Mammary epithelial cell (primary cell): ENCODE measurements at regions of chr17 and their contacts with region 1.

Region 1: GRCh38 chr17:30906101-30906911 is at the start of gene TEFM:
- DNase-seq: peak; percentile 91
- H3K4me3 ChIP-seq: peak within 1 kb of the TSS; percentile 60 to 98 (median 95)
- H3K27ac ChIP-seq: peak within 1 kb of the TSS; percentile 69
- H3K4me1 ChIP-seq: peaks cover 5% of the 10 kb centered on the region
- H3K27me3 ChIP-seq: no peaks in the 10 kb centered on the region
- CTCF ChIP-seq: no peak
- total RNA-seq, gene TEFM: 13.9 to 19.3 TPM

Region 2: DNA sequence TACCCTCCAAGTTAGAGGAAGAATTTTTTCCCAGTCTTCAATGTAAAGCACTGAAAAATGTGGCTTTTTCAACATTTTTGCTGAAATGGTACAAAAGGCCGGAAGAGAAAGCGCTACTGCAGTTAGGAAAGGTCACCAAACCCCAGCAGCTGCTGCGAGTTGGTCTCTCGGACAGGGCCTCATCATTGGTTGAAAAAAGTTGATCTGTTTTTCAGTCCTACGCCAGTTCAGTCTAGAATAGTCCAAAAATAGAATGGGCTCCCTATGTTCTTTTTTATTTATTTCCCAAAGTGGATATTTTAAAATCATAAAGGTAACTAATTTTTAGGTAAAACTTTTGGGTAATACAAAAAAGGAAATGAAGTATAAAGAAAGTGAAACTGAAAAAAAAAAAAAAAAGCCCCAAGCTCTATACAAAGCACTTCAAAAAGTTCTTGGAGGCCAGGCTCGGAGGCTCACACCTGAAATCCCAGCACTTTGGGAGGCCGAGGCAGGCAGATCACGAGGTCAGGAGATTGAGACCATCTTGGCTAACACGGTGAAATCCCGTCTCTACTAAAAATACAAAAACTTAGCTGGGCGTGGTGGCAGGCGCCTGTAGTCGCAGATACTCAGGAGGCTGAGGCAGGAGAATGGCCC is 32.9 kb after region 1 on chr17:
- CTCF ChIA-PET with region 1: no interaction called
- dilution Hi-C with region 1: no loop called
- in situ Hi-C with region 1: no loop called
- intact Hi-C with region 1: no loop called
- DNase-seq: no peak
- H3K4me3 ChIP-seq: no peak overlapping the region
- H3K27ac ChIP-seq: no peak overlapping the region
- H3K4me1 ChIP-seq: no peaks in the 10 kb centered on the region
- H3K27me3 ChIP-seq: no peaks in the 10 kb centered on the region
- CTCF ChIP-seq: no peak

Region 3: DNA sequence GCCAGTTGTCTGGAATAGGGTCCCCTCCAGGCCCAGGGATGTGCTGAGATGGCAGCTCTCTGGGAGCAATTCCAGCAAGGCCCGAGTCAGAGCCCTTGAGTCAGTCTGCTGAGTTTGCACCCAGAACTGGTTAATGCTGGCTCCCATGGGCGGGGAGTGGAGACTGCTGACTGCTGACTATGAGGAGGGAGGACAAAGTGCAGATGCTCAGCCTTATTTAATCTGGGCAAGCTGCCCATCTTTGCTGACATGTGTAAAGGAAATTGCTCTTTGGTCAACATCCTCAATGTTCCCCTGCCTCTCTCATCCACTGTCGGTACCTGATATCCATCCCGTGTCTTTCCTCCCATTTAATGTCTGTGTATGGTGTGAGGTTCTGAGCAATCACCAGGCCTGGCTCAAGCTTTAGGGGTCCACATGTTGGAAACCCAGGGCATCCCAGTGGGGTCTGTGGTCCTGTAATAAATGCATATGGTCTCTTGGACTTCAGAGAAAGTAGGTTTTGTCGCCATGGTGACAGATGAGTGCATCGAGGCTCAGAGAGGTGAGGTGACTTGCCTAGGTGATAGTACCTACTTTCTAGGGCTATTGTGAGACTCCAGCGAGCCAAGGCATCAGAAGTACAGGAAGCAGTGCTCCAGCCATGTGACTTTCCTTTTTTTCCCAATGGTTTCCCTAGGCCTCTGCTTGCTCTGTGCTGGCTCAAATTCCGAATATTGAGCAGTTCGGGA is 44.5 kb after region 1 on chr17:
- CTCF ChIA-PET with region 1: no interaction called
- dilution Hi-C with region 1: loop called (anchors 5 kb)
- in situ Hi-C with region 1: no loop called
- intact Hi-C with region 1: no loop called
- DNase-seq: peak; percentile 69
- H3K4me3 ChIP-seq: no peak overlapping the region
- H3K27ac ChIP-seq: no peak overlapping the region
- H3K4me1 ChIP-seq: no peaks in the 10 kb centered on the region
- H3K27me3 ChIP-seq: no peaks in the 10 kb centered on the region
- CTCF ChIP-seq: no peak

Region 4: DNA sequence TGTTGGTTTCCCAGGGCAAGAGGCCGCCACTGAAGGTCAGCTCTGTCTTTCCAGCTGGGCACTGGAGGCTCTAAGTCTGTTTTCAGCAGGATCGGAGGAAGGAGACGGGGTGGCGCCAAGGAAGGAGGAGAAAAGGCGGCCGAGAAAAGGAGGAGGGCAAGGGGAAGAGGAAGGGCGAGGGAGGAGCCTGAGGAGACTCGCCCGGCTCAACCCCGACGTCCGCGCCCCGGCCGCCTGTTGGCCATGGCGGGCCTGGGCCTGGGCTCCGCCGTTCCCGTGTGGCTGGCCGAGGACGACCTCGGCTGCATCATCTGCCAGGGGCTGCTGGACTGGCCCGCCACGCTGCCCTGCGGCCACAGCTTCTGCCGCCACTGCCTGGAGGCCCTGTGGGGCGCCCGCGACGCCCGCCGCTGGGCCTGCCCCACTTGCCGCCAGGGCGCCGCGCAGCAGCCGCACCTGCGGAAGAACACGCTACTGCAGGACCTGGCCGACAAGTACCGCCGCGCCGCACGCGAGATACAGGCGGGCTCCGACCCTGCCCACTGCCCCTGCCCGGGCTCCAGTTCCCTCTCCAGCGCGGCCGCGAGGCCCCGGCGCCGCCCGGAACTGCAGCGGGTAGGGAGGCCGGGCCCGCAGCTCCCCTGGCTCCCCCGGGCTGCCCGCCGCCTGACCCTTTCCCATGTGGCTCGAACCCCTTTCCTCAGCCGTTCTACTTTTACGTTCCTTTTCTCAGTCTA is 64.7 kb after region 1 on chr17 and contains the start of gene RNF135:
- CTCF ChIA-PET with region 1: no interaction called
- dilution Hi-C with region 1: no loop called
- in situ Hi-C with region 1: no loop called
- intact Hi-C with region 1: loop called (anchors 1 kb)
- DNase-seq: peak; percentile 88
- H3K4me3 ChIP-seq: peak within 1 kb of the TSS; percentile 62 to 83 (median 66)
- H3K27ac ChIP-seq: peak within 1 kb of the TSS; percentile 92
- H3K4me1 ChIP-seq: peaks cover 6% of the 10 kb centered on the region
- H3K27me3 ChIP-seq: no peaks in the 10 kb centered on the region
- CTCF ChIP-seq: peak in 1 of 2 donors; percentile 17
- total RNA-seq, gene RNF135: 13.3 to 13.7 TPM

Region 5: GRCh38 chr17:30996481-30996880 is 90.2 kb after region 1 on chr17:
- CTCF ChIA-PET with region 1: interaction called, 8 read pairs
- dilution Hi-C with region 1: loop called (anchors 5 kb)
- in situ Hi-C with region 1: no loop called
- intact Hi-C with region 1: no loop called
- DNase-seq: no peak
- H3K4me3 ChIP-seq: no peak overlapping the region
- H3K27ac ChIP-seq: no peak overlapping the region
- H3K4me1 ChIP-seq: no peaks in the 10 kb centered on the region
- H3K27me3 ChIP-seq: no peaks in the 10 kb centered on the region
- CTCF ChIP-seq: no peak

Region 6: DNA sequence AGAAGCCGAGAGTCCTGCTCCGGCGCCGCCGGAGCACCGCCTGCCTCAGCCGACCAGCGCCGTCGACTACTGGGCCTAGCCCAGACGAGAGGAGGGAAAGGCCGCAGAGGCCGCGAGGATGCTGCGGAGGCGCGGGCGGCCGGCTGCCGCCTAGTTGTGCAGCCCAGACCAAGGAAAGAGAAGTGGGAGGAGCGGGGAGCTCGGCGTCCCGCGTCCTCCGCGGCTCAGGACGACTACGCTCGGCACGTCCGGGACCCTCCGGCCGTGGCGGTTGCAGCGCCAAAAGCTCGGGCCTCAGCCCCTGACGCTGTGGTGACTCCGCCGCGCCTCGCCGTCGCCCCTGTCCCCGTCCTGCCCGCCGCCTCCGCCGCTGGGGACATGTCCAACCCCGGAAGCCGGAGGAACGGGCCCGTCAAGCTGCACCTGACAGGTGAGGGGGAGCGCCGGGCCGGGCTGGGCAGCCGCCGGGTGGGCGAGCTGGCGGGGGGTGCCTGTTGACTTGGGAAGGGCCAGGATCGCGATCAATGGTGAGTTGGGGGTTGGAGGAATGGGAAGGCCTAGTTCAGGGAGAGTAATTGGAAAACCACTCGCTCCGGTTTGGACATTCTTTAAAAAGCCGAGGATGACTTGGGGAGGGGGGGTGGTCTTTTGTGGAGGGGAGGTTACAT is 102.2 kb after region 1 on chr17:
- CTCF ChIA-PET with region 1: no interaction called
- dilution Hi-C with region 1: no loop called
- in situ Hi-C with region 1: no loop called
- intact Hi-C with region 1: loop called (anchors 1 kb)
- DNase-seq: peak; percentile 72
- H3K4me3 ChIP-seq: peak overlapping the region; percentile 59 to 67 (median 60)
- H3K27ac ChIP-seq: peak overlapping the region; percentile 27
- H3K4me1 ChIP-seq: peaks cover 8% of the 10 kb centered on the region
- H3K27me3 ChIP-seq: no peaks in the 10 kb centered on the region
- CTCF ChIP-seq: peak in 1 of 2 donors; percentile 10